ENCODE measurements at regions of chr18 and their contacts with region 1.

Region 1: GRCh38 chr18:74196220-74197119 is 48.1 kb downstream of the TIMM21 start:
- DNase-seq: peak in 5 of 7 donors; percentile 26 to 77 (median 40)
- H3K4me3 ChIP-seq: peak overlapping the region in 1 of 4 donors; percentile 16
- H3K27ac ChIP-seq: no peak overlapping the region
- H3K4me1 ChIP-seq: peaks cover 0 to 4% of the 10 kb centered on the region in 2 donors
- H3K27me3 ChIP-seq: peaks cover 7% of the 10 kb centered on the region
- CTCF ChIP-seq: peak; percentile 87 to 95 (median 90)
- POLR2A ChIP-seq: no peak

Region 2: DNA sequence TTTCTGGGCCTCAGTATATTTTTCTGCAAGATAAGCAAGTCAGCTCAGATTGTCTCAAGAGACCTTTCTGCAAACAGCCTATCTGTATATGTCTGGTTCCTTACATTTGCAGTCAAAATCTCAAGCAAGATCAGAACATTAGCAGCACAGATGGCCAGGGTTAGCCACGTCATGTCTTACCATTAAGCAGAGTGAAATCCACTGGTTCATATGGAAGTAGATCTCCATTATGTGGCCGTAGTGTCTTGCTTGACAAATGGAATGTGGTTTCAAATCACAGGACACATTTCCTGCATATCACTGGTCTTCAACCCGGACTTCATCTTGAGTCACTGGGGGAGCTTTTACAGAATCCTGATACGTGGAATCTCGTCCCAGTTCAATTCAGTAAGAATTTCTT is 549.1 kb before region 1 on chr18:
- intact Hi-C with region 1: no loop called
- DNase-seq: no peak
- H3K4me3 ChIP-seq: no peak overlapping the region
- H3K27ac ChIP-seq: no peak overlapping the region
- H3K4me1 ChIP-seq: no peaks in the 10 kb centered on the region
- H3K27me3 ChIP-seq: no peaks in the 10 kb centered on the region
- CTCF ChIP-seq: no peak
- POLR2A ChIP-seq: no peak

Region 3: GRCh38 chr18:74342416-74343043 is 146.1 kb after region 1 on chr18:
- intact Hi-C with region 1: loop called (anchors 2 to 5 kb)
- DNase-seq: peak in 4 of 7 donors; percentile 39 to 54 (median 47)
- H3K4me3 ChIP-seq: no peak overlapping the region
- H3K27ac ChIP-seq: no peak overlapping the region
- H3K4me1 ChIP-seq: no peaks in the 10 kb centered on the region
- H3K27me3 ChIP-seq: no peaks in the 10 kb centered on the region
- CTCF ChIP-seq: peak; percentile 41 to 88 (median 76)
- POLR2A ChIP-seq: no peak

Region 4: DNA sequence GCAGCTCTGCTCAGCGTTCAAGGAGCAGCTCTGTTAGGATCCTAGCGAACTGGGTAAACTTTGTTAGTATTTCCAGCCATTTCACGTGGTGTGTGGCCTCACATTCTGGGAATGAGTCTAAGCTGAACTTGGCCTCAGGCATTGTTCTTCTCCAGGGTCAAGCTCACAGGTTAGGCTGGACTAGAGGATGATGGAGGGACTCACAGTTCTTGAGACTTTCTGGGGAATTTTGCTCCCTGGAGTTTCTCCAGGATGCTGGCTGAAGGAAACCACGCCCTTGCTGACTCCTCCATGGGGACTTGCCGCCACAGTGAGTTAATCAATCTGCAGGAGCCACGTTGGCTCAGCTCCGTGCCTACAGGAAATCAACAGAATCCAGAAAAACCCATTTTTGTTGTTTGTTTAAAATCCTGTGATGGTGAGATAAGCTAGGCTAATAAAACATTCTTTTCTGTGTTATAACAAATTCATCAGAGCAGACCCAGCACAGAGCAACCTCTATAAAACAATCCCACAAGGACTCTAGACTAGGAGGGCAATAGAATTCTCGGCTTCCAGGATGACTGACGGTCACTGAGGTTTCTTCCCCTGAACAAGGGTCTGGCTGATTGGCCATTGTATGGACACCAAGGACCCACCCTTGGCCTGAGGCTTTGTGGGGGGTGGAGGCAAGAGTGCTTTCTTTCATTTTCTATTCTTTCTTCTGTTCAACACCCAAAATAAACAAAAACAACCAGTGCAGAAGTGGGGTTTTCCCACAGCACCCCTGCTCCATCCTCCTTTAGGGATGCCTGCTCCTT is 350.5 kb after region 1 on chr18:
- intact Hi-C with region 1: loop called (anchors 5 to 10 kb)
- DNase-seq: peak in 1 of 7 donors; percentile 34
- H3K4me3 ChIP-seq: no peak overlapping the region
- H3K27ac ChIP-seq: peak overlapping the region in 1 of 5 donors; percentile 50
- H3K4me1 ChIP-seq: peaks cover 0 to 2% of the 10 kb centered on the region in 2 donors
- H3K27me3 ChIP-seq: no peaks in the 10 kb centered on the region
- CTCF ChIP-seq: no peak
- POLR2A ChIP-seq: no peak

Region 5: GRCh38 chr18:74551936-74552555 is 355.6 kb after region 1 on chr18:
- intact Hi-C with region 1: loop called (anchors 5 to 10 kb)
- DNase-seq: peak; percentile 71 to 94 (median 87)
- H3K4me3 ChIP-seq: no peak overlapping the region
- H3K27ac ChIP-seq: no peak overlapping the region
- H3K4me1 ChIP-seq: peaks cover 0 to 2% of the 10 kb centered on the region in 2 donors
- H3K27me3 ChIP-seq: peaks cover 8% of the 10 kb centered on the region
- CTCF ChIP-seq: peak; percentile 64 to 85 (median 76)
- POLR2A ChIP-seq: no peak